GM10248 (cell line): ENCODE measurements at regions of chr5 and their contacts with region 1.

Region 1: GRCh38 chr5:88690409-88691229 is 192.4 kb downstream of the MEF2C start:
- DNase-seq: peak; percentile 81
- CTCF ChIP-seq: peak; percentile 97

Region 2: DNA sequence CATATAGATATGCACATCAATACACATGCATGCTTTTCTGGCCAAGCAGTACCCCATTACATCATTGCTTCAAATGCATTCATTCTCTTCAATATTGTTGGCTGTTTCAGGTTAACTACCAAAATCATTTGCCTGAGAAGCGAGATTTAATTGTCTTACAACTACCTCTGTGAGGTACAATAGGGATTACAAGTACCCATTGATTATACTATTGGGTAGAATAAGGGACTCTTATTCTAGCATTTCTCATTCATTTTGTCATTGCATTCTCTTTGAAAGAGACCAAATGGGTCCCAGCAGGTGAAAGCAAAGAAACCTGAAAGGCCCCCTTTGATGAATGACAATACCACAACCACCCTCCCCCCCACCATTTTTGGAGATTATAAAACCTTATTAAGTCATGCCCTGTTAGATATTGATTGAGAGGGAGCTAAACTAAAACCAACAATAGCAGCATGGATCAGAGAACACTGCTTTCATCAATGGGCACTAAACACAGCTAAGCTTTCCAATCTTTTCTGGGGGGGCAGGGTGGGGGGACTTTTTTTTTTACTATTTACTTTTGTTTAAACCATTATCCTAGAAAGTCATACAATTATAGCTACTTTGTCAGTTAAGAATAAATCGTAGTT is 902.9 kb before region 1 on chr5:
- CTCF ChIA-PET with region 1: interaction called, 69 read pairs
- POLR2A ChIA-PET with region 1: no interaction called
- DNase-seq: no peak
- CTCF ChIP-seq: no peak

Region 3: GRCh38 chr5:88666761-88667495 is 23.7 kb before region 1 on chr5:
- CTCF ChIA-PET with region 1: interaction called, 15 read pairs
- POLR2A ChIA-PET with region 1: no interaction called
- DNase-seq: no peak
- CTCF ChIP-seq: no peak

Region 4: DNA sequence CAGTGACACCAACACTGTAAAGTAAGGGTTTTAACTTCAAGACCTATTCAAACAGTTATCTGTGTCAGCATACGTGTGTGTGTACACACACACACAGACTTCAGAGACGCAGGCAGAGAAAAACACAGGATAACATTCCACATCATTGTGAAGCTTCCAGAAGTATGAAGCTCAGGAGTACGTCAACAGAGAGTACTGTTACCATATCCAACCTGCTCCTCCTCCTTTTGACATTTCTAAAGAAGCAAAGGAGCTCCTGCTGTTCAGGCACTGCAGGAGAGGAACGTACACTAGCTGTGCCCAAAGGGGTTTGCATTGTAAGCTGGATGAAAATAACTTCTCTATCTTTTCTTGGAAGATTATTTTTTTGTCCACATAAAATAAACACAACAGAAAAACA is 11.7 kb after region 1 on chr5:
- CTCF ChIA-PET with region 1: interaction called, 44 read pairs
- POLR2A ChIA-PET with region 1: no interaction called
- DNase-seq: no peak
- CTCF ChIP-seq: no peak